PC-3 (cell line): ENCODE measurements at regions of chr22 and their contacts with region 1.

Region 1: GRCh38 chr22:50089682-50090411 is at the start of gene MOV10L1:
- DNase-seq: no peak
- ATAC-seq: no peak
- H3K4me3 ChIP-seq: no peak within 1 kb of the TSS
- H3K27ac ChIP-seq: no peak within 1 kb of the TSS
- H3K4me1 ChIP-seq: no peaks in the 10 kb centered on the region
- H3K27me3 ChIP-seq: no peaks in the 10 kb centered on the region
- CTCF ChIP-seq: no peak
- total RNA-seq, gene MOV10L1: 0.26 and 1.6 TPM in 2 replicates

Region 2: DNA sequence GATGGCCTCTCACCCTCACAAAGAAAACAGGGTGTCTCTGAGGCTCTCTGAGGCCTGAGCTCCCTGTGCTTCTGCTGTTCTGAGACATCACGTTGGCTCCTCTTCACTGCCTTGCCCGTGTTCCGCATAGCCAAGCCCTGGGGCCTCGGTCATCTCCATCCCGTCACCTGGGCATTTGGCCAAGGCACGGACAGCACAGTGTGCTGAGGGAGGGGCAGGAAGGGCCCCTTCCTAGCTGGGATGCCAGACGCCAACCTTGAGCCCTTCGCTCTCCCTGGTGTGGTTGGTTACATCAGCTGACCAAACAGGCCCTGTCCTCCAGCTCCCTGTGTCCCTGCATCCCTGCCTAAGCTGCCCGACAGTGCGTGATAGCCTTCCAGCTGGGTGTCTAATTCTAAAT is 25.8 kb after region 1 on chr22:
- CTCF ChIA-PET with region 1: no interaction called
- POLR2A ChIA-PET with region 1: interaction called, 14 read pairs
- intact Hi-C with region 1: no loop called
- DNase-seq: peak; percentile 80
- ATAC-seq: peak; percentile 89
- H3K4me3 ChIP-seq: no peak overlapping the region
- H3K27ac ChIP-seq: no peak overlapping the region
- H3K4me1 ChIP-seq: peaks cover 24% of the 10 kb centered on the region
- H3K27me3 ChIP-seq: no peaks in the 10 kb centered on the region
- CTCF ChIP-seq: no peak

Region 3: DNA sequence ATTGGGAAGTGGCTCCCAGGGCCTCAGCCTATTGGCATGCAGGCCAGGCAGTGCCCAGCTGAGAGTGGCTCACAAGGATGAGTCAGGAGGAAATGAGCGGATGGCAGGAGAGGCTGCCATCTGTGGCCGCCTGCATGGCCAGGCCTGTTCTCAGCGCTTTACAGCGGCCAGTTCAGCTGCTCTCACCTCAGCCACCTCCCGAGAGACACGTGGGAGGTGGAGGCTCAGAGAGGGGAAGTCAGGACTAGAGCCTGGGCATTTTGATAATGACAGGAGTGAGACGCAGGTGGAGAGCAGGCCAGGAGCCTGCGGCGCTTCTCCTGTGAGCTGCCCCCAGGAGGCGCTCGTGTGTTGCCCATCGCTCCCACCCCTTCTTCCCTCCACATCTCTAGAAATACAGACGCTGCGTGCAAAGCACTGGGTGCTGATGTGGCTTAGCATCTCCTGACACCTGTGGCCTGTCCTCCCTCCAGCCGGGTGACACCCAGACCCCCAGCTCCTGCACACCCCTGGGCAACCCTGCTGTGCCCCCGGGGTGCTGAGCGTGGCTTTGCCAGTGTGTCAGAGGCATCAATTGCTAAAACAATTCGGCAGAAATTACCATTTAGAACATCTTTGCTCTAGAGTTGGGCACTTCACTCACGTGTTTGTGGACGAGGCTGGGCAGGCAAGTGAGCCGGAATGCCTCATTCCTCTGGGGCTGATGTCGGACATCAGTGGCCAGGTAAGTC is 59.3 kb after region 1 on chr22:
- CTCF ChIA-PET with region 1: no interaction called
- POLR2A ChIA-PET with region 1: no interaction called
- intact Hi-C with region 1: no loop called
- DNase-seq: peak; percentile 72
- ATAC-seq: peak; percentile 97
- H3K4me3 ChIP-seq: peak overlapping the region; percentile 50; the same call in 1 of the 2 replicates
- H3K27ac ChIP-seq: no peak overlapping the region
- H3K4me1 ChIP-seq: no peaks in the 10 kb centered on the region
- H3K27me3 ChIP-seq: no peaks in the 10 kb centered on the region
- CTCF ChIP-seq: peak; percentile 88

Region 4: DNA sequence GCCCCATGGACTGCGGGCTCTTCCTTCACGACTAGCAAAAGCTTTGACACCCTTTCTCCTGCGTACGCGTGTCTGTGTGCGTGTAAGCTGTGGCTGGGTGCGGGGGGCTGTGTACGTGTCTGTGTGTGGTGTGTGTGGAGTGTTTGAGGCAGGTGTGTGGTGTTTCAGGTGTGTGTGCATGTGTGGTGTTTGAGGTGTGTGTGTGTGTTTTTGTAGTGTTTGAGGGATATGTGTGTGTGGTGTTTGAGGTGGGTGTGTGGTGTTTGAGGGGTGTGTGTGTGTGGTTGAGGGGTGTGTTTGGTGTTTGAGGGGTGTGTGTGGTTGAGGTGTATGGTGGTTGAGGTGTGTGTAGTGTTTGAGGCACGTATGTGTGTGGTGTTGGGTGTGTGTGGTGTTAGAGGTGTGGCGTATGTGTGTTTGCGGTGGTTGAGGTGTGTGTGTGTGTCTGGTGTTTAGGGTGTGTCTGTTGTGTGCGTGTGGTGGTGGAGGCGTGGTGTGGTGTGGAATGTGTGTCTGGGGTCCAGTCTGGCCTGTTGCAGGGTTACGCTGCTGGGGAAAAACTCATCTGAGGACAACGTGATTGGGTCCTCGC is 538.8 kb after region 1 on chr22:
- CTCF ChIA-PET with region 1: no interaction called
- POLR2A ChIA-PET with region 1: no interaction called
- intact Hi-C with region 1: no loop called
- DNase-seq: no peak
- ATAC-seq: no peak
- H3K4me3 ChIP-seq: peak overlapping the region; percentile 81
- H3K27ac ChIP-seq: no peak overlapping the region
- H3K4me1 ChIP-seq: peaks cover 13% of the 10 kb centered on the region
- H3K27me3 ChIP-seq: no peaks in the 10 kb centered on the region
- CTCF ChIP-seq: no peak